ENCODE measurements at regions of chr2 and their contacts with region 1.

Region 1: GRCh38 chr2:187842978-187843847 is 289.0 kb upstream of the TFPI start:
- DNase-seq: peak; percentile 64
- ATAC-seq: peak; percentile 89
- H3K4me3 ChIP-seq: no peak overlapping the region; a peak in 1 of 6 replicates
- H3K27ac ChIP-seq: no peak overlapping the region
- H3K4me1 ChIP-seq: no peaks in the 10 kb centered on the region
- H3K27me3 ChIP-seq: no peaks in the 10 kb centered on the region
- CTCF ChIP-seq: peak; percentile 76
- EP300 ChIP-seq: no peak
- POLR2A ChIP-seq: no peak
- RAD21 ChIP-seq: peak; percentile 53

Region 2: GRCh38 chr2:187138265-187138664 is 704.9 kb before region 1 on chr2:
- CTCF ChIA-PET with region 1: no interaction called
- POLR2A ChIA-PET with region 1: no interaction called
- in situ Hi-C with region 1: no loop called
- intact Hi-C with region 1: loop called (anchors 5 kb)
- DNase-seq: peak; percentile 37
- ATAC-seq: peak; percentile 92
- H3K4me3 ChIP-seq: no peak overlapping the region
- H3K27ac ChIP-seq: no peak overlapping the region
- H3K4me1 ChIP-seq: no peaks in the 10 kb centered on the region
- H3K27me3 ChIP-seq: no peaks in the 10 kb centered on the region
- CTCF ChIP-seq: peak; percentile 64
- EP300 ChIP-seq: no peak
- POLR2A ChIP-seq: no peak
- RAD21 ChIP-seq: no peak

Region 3: DNA sequence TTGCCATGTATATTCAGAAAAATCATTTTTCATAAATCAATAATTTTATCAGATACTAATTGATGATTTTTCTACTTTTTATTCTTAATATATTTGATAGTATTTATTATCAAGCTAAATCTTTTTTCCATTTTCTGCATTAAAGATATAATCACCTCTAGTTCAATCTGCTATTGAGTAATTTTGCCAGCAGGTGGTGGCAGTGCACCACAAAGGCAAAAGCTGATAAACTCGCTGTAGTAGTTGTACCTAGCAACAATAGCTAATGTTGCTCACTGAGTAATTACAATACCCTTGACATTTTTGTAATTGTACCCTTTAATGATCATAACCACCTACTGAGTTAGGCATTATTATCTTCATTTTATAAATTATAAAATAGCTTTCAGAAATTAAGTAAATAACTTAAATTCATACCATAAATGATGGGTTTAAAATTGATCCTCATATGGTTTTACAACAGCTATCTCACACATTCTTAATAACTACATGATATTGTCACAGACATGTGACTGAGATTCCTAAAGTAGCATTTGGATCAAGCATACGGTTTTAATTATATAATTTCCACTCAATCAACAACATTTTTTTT is 343.2 kb before region 1 on chr2:
- CTCF ChIA-PET with region 1: interaction called, 25 read pairs
- POLR2A ChIA-PET with region 1: no interaction called
- in situ Hi-C with region 1: loop called (anchors 10 kb)
- intact Hi-C with region 1: loop called (anchors 1 kb)
- DNase-seq: peak; percentile 66
- ATAC-seq: peak; percentile 72
- H3K4me3 ChIP-seq: no peak overlapping the region
- H3K27ac ChIP-seq: peak overlapping the region; percentile 45
- H3K4me1 ChIP-seq: peaks cover 44% of the 10 kb centered on the region
- H3K27me3 ChIP-seq: no peaks in the 10 kb centered on the region
- CTCF ChIP-seq: peak; percentile 81
- EP300 ChIP-seq: no peak
- POLR2A ChIP-seq: no peak
- RAD21 ChIP-seq: peak; percentile 91

Region 4: DNA sequence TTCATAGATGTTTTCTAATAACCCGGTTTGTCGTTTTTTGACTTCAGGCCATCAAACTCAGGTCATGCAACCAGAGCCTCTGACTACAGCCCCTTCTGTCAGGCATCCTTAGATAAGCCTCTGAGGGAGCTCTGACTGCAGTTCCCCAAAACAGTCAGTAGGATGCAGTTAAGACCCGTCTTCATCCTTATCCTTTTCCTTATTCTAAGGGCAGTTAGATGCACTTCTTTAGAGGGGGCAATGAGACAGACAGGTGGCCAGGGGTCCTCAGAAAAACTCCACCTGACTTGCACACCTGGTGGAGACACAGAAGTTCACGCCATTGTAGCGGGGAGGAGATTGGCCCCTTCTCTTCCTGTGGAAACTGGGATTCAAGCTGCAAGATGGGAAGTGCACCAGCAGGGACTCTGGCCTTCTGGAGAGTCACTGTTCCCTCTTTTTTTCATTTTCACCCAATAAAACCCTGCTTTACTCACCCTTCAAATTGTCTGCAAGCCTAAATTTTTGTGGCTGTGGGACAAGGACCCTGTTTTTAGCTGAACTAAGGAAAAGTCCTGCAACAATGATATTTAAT is 184.2 kb before region 1 on chr2:
- CTCF ChIA-PET with region 1: no interaction called
- POLR2A ChIA-PET with region 1: no interaction called
- in situ Hi-C with region 1: no loop called
- intact Hi-C with region 1: loop called (anchors 5 kb)
- DNase-seq: peak; percentile 24
- ATAC-seq: peak; percentile 96
- H3K4me3 ChIP-seq: no peak overlapping the region
- H3K27ac ChIP-seq: no peak overlapping the region
- H3K4me1 ChIP-seq: no peaks in the 10 kb centered on the region
- H3K27me3 ChIP-seq: peaks cover 0 to 4% of the 10 kb centered on the region in 2 experiments; a peak in 1 of 5 replicates
- CTCF ChIP-seq: peak; percentile 30; the same call in 1 of the 2 replicates
- EP300 ChIP-seq: no peak
- POLR2A ChIP-seq: no peak
- RAD21 ChIP-seq: no peak

Measured in HepG2 (cell line).